Activated CD8-positive, alpha-beta T cell treated with anti-CD3 and anti-CD28 coated beads for 36 hours (primary cell): ENCODE measurements at regions of chr6 and their contacts with region 1.

Region 1: GRCh38 chr6:154852687-154853086 is 119.5 kb downstream of the SCAF8 start:
- DNase-seq: no peak
- ATAC-seq: no peak
- H3K4me3 Mint-ChIP-seq: no peak overlapping the region
- H3K27ac Mint-ChIP-seq: no peak overlapping the region
- H3K4me1 Mint-ChIP-seq: peaks cover 17% of the 10 kb centered on the region
- H3K27me3 Mint-ChIP-seq: no peaks in the 10 kb centered on the region
- CTCF ChIP-seq: no peak

Region 2: GRCh38 chr6:154868143-154868594 is 15.5 kb after region 1 on chr6:
- CTCF ChIA-PET with region 1: interaction called, 15 read pairs
- POLR2A ChIA-PET with region 1: no interaction called
- intact Hi-C with region 1: no loop called
- DNase-seq: no peak
- ATAC-seq: no peak
- H3K4me3 Mint-ChIP-seq: no peak overlapping the region
- H3K27ac Mint-ChIP-seq: no peak overlapping the region
- H3K4me1 Mint-ChIP-seq: peaks cover 17% of the 10 kb centered on the region
- H3K27me3 Mint-ChIP-seq: no peaks in the 10 kb centered on the region
- CTCF ChIP-seq: peak; percentile 67

Region 3: GRCh38 chr6:154969796-154970195 is 117.1 kb after region 1 on chr6:
- CTCF ChIA-PET with region 1: no interaction called
- POLR2A ChIA-PET with region 1: no interaction called
- intact Hi-C with region 1: no loop called
- DNase-seq: no peak
- ATAC-seq: no peak
- H3K4me3 Mint-ChIP-seq: no peak overlapping the region
- H3K27ac Mint-ChIP-seq: no peak overlapping the region
- H3K4me1 Mint-ChIP-seq: no peaks in the 10 kb centered on the region
- H3K27me3 Mint-ChIP-seq: no peaks in the 10 kb centered on the region
- CTCF ChIP-seq: no peak